Posterior vena cava (tissue), 2 donors: ENCODE measurements at regions of chr7 and their contacts with region 1.

Region 1: DNA sequence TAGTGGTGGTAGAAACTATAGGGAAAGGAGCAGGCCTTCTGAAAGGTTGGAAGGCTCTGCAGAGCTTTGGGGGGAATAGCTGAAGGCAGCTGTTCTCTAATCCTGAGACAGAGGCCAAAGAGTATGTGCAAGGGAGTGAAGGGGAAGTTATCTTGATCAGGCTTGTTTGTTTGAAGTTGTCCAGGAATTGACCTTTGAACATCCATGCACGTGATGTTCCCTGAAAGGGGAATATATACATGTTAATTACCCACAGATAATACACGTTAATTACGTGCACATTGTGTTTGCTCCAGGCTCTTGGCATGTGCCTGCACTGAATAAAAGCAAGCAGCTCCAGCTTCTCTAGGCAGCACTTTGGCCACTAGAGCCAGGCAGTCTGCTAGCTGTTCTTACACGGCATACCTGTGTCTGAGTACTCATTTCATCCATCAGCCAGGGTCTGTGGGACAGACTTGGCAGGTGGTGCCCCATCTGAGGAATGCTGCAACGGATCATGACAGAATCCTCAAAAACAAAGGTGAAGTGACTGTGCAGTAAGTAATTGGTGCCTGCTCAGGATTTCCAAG is 18.0 kb upstream of the STARD3NL start:
- DNase-seq: no peak

Region 2: GRCh38 chr7:38123494-38123893 is 36.6 kb before region 1 on chr7:
- intact Hi-C with region 1: loop called in 1 of 2 experiments (anchors 1 kb)
- DNase-seq: no peak

Region 3: GRCh38 chr7:38142736-38143135 is 17.4 kb before region 1 on chr7:
- intact Hi-C with region 1: no loop called
- DNase-seq: no peak

Region 4: DNA sequence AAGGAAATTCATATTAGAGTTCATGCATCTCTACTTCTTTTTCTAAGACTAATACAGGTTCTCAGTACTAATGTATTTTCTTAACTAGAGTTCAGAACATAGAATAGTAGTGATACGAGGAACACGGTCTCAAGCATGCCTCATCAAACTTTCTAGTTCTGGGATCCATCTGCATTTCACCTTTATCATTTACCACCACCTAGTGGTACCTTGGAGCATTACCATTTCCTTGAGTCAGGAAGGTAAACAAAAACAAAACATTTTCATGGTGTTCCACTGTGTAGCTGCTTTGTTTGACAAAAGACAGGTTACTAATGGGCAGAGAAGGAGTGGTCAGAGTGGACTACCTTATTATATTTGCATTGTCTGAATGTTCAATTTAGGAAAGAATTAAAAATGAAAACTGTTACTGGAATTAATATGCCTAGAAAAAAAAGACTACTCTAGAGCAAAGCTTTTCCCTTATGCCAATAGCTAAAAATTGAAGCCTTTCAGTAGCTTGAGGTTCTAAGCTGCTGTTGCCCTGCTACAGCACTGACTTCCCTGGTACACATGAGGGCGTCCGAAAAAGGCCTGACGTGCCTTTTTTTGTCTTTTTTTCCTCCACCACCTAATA is 62.5 kb after region 1 on chr7:
- intact Hi-C with region 1: no loop called
- DNase-seq: no peak